ENCODE measurements at regions of chr2 and their contacts with region 1.

Region 1: DNA sequence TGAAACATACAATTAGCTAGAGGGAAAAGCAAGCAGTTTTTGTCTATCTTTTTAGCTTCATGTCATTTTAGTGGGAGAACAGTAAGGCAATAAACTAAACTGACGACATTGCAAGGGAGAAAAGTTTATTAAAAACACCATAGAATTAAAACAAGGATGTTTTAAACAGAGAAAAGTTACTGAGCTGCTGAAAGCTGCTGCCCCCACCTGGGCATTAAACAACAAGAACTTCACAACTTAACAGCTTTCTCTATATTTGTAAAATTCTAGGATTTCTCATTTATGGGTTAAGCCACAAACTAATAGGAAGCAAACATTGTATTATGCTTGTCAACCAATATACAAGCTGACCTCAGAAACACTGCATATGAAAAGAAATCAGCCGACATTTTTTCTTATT is 289.2 kb downstream of the ERBB4 start:
- DNase-seq: no peak
- ATAC-seq: no peak
- H3K4me3 ChIP-seq: no peak overlapping the region
- H3K27ac ChIP-seq: no peak overlapping the region
- H3K4me1 ChIP-seq: no peaks in the 10 kb centered on the region
- H3K27me3 ChIP-seq: no peaks in the 10 kb centered on the region
- CTCF ChIP-seq: peak; percentile 6 to 28 (median 17); a peak in 1 of 6 replicates
- EP300 ChIP-seq: no peak
- POLR2A ChIP-seq: no peak
- RAD21 ChIP-seq: peak; percentile 53; the same call in 1 of the 2 replicates

Region 2: GRCh38 chr2:211879323-211879722 is 370.1 kb before region 1 on chr2:
- CTCF ChIA-PET with region 1: interaction called, 7 read pairs
- POLR2A ChIA-PET with region 1: no interaction called
- RAD21 ChIA-PET with region 1: interaction called, 10 read pairs
- SMC1A ChIA-PET with region 1: interaction called, 5 read pairs
- in situ Hi-C with region 1: no loop called
- intact Hi-C with region 1: no loop called
- DNase-seq: no peak
- ATAC-seq: peak; percentile 48; the same call in 1 of the 3 replicates
- H3K4me3 ChIP-seq: no peak overlapping the region
- H3K27ac ChIP-seq: no peak overlapping the region
- H3K4me1 ChIP-seq: no peaks in the 10 kb centered on the region
- H3K27me3 ChIP-seq: no peaks in the 10 kb centered on the region
- CTCF ChIP-seq: peak in 1 of 3 experiments; percentile 18; a peak in 1 of 6 replicates
- EP300 ChIP-seq: no peak
- POLR2A ChIP-seq: no peak
- RAD21 ChIP-seq: peak; percentile 76

Region 3: GRCh38 chr2:211930331-211930730 is 319.1 kb before region 1 on chr2:
- CTCF ChIA-PET with region 1: interaction called, 5 read pairs
- POLR2A ChIA-PET with region 1: no interaction called
- RAD21 ChIA-PET with region 1: interaction called, 10 read pairs
- SMC1A ChIA-PET with region 1: no interaction called
- in situ Hi-C with region 1: no loop called
- intact Hi-C with region 1: no loop called
- DNase-seq: peak; percentile 2
- ATAC-seq: peak; percentile 82
- H3K4me3 ChIP-seq: no peak overlapping the region
- H3K27ac ChIP-seq: no peak overlapping the region
- H3K4me1 ChIP-seq: no peaks in the 10 kb centered on the region
- H3K27me3 ChIP-seq: no peaks in the 10 kb centered on the region
- CTCF ChIP-seq: no peak
- EP300 ChIP-seq: no peak; a peak in 1 of 4 replicates
- POLR2A ChIP-seq: no peak
- RAD21 ChIP-seq: peak; percentile 62

Region 4: DNA sequence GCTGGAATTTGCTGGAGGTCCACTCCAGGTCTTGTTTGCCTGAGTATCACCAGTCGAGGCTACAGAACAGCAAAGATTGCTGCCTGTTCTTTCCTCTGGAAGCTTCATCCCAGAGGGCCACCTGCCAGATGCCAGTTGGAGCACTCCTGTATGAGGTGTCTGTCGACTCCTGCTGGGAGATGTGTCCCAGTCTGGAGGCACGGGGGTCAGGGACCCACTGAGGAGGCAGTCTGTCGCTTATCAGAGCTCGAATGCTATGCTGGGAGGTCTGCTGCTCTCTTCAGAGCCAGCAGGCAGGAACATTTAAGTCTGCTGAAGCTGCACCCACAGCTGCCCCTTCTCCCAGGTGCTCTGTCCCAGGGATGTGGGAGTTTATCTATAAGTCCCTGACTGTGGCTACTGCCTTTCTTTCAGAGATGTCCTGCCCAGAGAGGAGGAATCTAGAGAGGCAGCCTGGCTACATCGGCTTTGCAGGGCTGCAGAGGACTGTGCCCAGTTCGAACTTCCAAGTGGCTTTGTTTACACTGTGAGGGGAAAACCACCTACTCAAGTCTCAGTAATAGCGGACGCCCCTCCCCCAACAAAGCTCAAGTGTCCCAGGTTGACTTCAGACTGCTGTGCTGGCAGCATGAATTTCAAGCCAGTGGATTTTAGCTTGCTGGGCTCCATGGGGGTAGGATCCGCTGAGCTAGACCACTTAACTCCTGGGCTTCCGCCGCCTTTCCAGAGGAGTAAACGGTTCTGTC is 11.9 kb before region 1 on chr2:
- CTCF ChIA-PET with region 1: interaction called, 12 read pairs
- POLR2A ChIA-PET with region 1: no interaction called
- RAD21 ChIA-PET with region 1: no interaction called
- SMC1A ChIA-PET with region 1: interaction called, 5 read pairs
- in situ Hi-C with region 1: no loop called
- intact Hi-C with region 1: no loop called
- DNase-seq: no peak
- ATAC-seq: no peak
- H3K4me3 ChIP-seq: no peak overlapping the region
- H3K27ac ChIP-seq: no peak overlapping the region
- H3K4me1 ChIP-seq: no peaks in the 10 kb centered on the region
- H3K27me3 ChIP-seq: no peaks in the 10 kb centered on the region
- CTCF ChIP-seq: no peak
- EP300 ChIP-seq: no peak
- POLR2A ChIP-seq: no peak
- RAD21 ChIP-seq: no peak